ENCODE measurements at regions of chr15 and their contacts with region 1.

Region 1: GRCh38 chr15:88620995-88621772 is at the start of gene AEN:
- DNase-seq: peak; percentile 96
- H3K4me3 ChIP-seq: peak within 1 kb of the TSS; percentile 99
- H3K27ac ChIP-seq: peak within 1 kb of the TSS; percentile 73
- H3K4me1 ChIP-seq: peaks cover 37% of the 10 kb centered on the region
- CTCF ChIP-seq: no peak
- total RNA-seq, gene AEN: 55.9 and 66.6 TPM in 2 replicates

Region 2: DNA sequence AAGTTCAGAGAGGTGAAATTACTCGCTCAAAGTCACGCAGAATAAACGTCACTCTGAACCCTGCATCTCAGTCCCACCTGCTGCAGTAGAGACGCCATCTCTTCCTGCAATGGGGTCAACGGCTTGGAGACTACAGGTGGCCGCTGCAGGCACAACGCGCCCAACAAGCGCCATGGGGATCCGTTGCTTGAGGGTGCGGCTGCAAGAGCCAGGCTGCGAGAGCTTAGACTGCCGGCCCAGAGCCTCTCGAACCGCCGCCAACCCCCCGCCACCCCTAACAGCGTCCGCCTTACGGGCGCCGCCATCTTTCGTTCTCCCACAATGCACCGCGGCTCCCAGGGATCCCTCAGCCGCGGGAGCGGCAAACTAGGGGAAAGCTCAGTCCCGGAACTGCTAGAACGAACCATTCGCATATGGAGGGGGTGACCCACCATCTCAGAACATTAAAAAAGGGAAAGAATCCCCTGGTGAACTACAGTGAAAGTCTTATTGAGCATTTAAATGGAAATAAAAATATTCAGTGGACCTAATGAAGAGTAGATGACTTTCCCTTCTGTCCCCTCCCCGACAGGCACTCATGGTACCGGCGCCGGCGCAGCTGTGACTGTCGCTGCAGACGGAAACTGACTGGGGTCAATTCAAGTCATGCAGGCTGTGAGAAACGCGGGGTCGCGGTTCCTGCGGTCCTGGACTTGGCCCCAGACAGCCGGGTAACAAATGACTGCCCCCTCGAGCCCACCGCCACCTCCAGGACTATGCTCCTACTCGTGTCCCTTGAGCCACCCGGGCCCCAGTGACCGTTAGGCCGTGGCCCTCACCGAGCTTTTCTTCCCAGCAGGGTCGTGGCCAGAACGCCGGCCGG is 153.9 kb before region 1 on chr15 and contains the starts of genes MRPL46 and MRPS11:
- CTCF ChIA-PET with region 1: no interaction called
- POLR2A ChIA-PET with region 1: interaction called, 3 read pairs
- intact Hi-C with region 1: loop called (anchors 2 kb)
- DNase-seq: peak; percentile 94
- H3K4me3 ChIP-seq: peak within 1 kb of the TSS; percentile 93
- H3K27ac ChIP-seq: peak within 1 kb of the TSS; percentile 64
- H3K4me1 ChIP-seq: peaks cover 31% of the 10 kb centered on the region
- CTCF ChIP-seq: no peak
- total RNA-seq, gene MRPL46: 30.4 and 32.4 TPM in 2 replicates
- total RNA-seq, gene MRPS11: 49.8 and 61.6 TPM in 2 replicates

Region 3: GRCh38 chr15:88546248-88547129 is 74.7 kb before region 1 on chr15 and contains the start of gene DET1:
- CTCF ChIA-PET with region 1: no interaction called
- POLR2A ChIA-PET with region 1: no interaction called
- intact Hi-C with region 1: loop called (anchors 5 kb)
- DNase-seq: peak; percentile 97
- H3K4me3 ChIP-seq: peak within 1 kb of the TSS; percentile 85
- H3K27ac ChIP-seq: peak within 1 kb of the TSS; percentile 72
- H3K4me1 ChIP-seq: peaks cover 12% of the 10 kb centered on the region
- CTCF ChIP-seq: peak; percentile 82
- total RNA-seq, gene DET1: 7.1 and 9.8 TPM in 2 replicates

Region 4: DNA sequence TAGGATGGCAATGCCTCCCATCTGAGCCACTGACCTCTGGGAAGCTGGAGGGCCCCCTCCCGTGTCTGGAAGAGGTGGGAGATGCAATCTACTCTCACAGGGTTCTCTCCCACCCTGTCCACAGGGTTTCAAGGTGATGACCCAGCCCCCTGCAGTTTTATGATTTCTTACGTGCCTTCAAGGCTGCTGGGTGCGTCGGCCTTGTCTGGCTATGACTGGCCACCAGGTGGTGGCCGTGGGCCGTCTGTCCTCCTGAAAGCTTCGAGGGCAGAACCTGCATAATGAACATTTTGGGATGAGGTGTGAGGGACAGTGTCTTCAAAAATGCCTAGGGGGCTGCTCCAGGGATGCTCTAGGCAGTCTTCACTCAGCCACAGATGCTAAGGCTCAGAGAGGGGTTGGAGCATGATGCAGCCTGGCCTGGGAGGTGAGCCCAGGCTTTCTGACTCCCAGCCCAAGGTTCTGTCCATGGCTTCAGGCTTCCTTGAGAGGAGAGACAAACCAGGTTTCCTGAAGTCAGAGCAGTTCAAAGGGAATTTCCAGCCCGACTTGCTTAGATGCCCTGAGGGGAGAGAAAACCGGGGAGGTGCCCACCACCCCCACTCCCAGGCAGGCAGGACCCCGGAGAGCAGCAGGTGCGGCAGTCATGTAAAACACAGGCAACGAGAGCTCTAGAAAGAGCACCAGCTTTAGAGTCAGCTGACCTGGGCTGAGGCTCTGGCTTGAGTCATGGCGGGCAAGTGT is 36.3 kb after region 1 on chr15:
- CTCF ChIA-PET with region 1: interaction called, 6 read pairs
- POLR2A ChIA-PET with region 1: interaction called, 4 read pairs
- intact Hi-C with region 1: loop called (anchors 2 kb)
- DNase-seq: no peak
- H3K4me3 ChIP-seq: peak overlapping the region; percentile 8
- H3K27ac ChIP-seq: peak overlapping the region; percentile 86
- H3K4me1 ChIP-seq: peaks cover 33% of the 10 kb centered on the region
- CTCF ChIP-seq: peak; percentile 60

Region 5: DNA sequence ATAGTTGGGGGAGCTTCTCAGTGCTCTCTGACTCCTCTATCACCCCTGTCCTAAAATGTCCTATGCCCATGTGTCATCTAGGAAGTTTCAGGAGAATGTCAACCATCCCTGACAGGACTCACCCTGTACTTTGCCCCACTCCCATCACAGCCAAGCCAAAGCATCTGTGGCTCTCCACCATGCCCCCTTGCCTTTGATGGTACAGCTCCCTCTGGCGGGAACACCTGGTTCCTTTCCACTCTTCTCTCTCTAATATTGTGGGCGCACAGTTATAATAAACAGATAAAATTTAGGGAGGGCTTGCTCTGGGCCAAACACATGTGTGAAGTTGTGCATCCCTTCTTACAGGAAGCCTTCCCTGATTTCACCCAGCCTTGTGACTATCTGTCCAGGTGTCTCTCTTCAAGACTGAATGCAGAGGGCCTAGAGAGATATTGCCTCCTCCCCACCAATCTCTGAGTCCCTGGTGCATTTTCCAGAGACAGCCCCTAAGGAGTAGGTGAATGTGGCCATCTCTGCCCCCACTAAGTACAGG is 80.4 kb after region 1 on chr15:
- CTCF ChIA-PET with region 1: no interaction called
- POLR2A ChIA-PET with region 1: no interaction called
- intact Hi-C with region 1: loop called (anchors 1 kb)
- DNase-seq: peak; percentile 60
- H3K4me3 ChIP-seq: no peak overlapping the region
- H3K27ac ChIP-seq: no peak overlapping the region
- H3K4me1 ChIP-seq: no peaks in the 10 kb centered on the region
- CTCF ChIP-seq: peak; percentile 82

Region 6: GRCh38 chr15:88904624-88905327 is 283.6 kb after region 1 on chr15:
- CTCF ChIA-PET with region 1: no interaction called
- POLR2A ChIA-PET with region 1: no interaction called
- intact Hi-C with region 1: loop called (anchors 10 kb)
- DNase-seq: peak; percentile 81
- H3K4me3 ChIP-seq: no peak overlapping the region
- H3K27ac ChIP-seq: no peak overlapping the region
- H3K4me1 ChIP-seq: peaks cover 7% of the 10 kb centered on the region
- CTCF ChIP-seq: peak; percentile 96